Activated CD4-positive, alpha-beta T cell treated with anti-CD3 and anti-CD28 coated beads, Interleukin-2, amount 10 ng/mL, durations not matched to agents 24 days and 14 days (primary cell): ENCODE measurements at regions of chr4 and their contacts with region 1.

Region 1: GRCh38 chr4:121139533-121140222 is 24.4 kb downstream of the TNIP3 start:
- DNase-seq: no peak
- H3K4me3 Mint-ChIP-seq: peak overlapping the region; percentile 26
- H3K27ac Mint-ChIP-seq: peak overlapping the region; percentile 78
- H3K4me1 Mint-ChIP-seq: peaks cover 45% of the 10 kb centered on the region
- H3K27me3 Mint-ChIP-seq: peaks cover 1% of the 10 kb centered on the region

Region 2: DNA sequence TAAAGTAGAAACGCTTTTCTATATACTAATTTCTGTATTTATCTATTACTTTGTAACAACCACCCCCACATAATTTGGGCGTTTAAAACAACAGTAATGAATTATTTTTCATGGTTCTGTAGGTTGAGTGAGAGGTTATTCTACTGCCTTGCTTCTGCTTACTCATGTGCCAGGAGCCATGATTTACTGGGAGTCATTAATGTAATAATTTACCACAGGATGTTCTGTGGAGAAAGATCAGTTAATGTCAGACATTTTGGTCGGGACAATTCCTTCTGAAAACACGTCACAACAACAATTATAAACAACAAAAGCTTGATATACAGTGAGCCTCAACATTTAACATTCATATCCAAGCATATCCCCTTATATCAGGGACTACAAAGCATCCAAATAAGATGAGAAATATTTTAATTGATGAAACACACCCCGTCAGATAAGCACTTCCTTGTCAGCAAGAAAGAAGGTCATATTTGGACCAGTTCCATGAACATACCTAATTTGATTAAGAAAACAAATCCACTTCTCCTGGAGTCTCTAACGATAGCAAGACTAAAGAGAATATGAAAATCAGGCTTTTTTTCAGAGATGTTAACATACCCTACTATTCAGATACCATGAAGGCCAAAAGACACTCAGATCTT is 455.7 kb before region 1 on chr4:
- intact Hi-C with region 1: no loop called
- DNase-seq: no peak
- H3K4me3 Mint-ChIP-seq: no peak overlapping the region
- H3K27ac Mint-ChIP-seq: no peak overlapping the region
- H3K4me1 Mint-ChIP-seq: no peaks in the 10 kb centered on the region
- H3K27me3 Mint-ChIP-seq: peaks cover 13% of the 10 kb centered on the region

Region 3: GRCh38 chr4:121122661-121123060 is 17.0 kb before region 1 on chr4:
- intact Hi-C with region 1: no loop called
- DNase-seq: no peak
- H3K4me3 Mint-ChIP-seq: no peak overlapping the region
- H3K27ac Mint-ChIP-seq: no peak overlapping the region
- H3K4me1 Mint-ChIP-seq: peaks cover 31% of the 10 kb centered on the region
- H3K27me3 Mint-ChIP-seq: no peaks in the 10 kb centered on the region

Region 4: DNA sequence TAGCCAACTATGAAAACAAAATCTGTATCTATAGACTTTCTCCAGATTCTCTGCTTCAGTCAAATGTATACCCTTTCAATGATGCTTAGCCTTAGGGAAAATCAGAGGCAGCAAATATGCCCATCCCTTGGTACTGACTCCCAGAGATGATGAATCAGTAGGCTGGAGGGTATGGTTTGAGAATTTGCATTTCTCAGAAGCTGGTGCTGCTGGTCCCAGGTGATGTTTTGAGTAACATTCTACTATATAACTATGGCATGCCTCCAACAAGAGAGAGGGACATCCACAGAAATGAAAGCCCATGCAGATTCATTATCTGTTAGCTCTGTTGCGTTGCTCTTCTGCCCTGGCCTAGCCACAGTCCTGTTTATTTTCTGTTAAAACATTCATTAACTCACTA is 10.8 kb after region 1 on chr4:
- intact Hi-C with region 1: loop called (anchors 1 kb)
- DNase-seq: no peak
- H3K4me3 Mint-ChIP-seq: no peak overlapping the region
- H3K27ac Mint-ChIP-seq: peak overlapping the region; percentile 19
- H3K4me1 Mint-ChIP-seq: peaks cover 49% of the 10 kb centered on the region
- H3K27me3 Mint-ChIP-seq: peaks cover 4% of the 10 kb centered on the region

Region 5: GRCh38 chr4:121182296-121182695 is 42.6 kb after region 1 on chr4:
- intact Hi-C with region 1: loop called (anchors 2 kb)
- DNase-seq: peak; percentile 84
- H3K4me3 Mint-ChIP-seq: peak overlapping the region; percentile 79
- H3K27ac Mint-ChIP-seq: peak overlapping the region; percentile 90
- H3K4me1 Mint-ChIP-seq: peaks cover 55% of the 10 kb centered on the region
- H3K27me3 Mint-ChIP-seq: no peaks in the 10 kb centered on the region